Dorsolateral prefrontal cortex (tissue), 120 donors: ENCODE measurements at regions of chr13 and their contacts with region 1.

Region 1: GRCh38 chr13:100721885-100722512 is 47.4 kb upstream of the TMTC4 start:
- DNase-seq: peak in 5 of 10 donors; percentile 45 to 74 (median 58)
- H3K4me3 ChIP-seq: peak overlapping the region in 1 of 59 donors; percentile 1
- H3K27ac ChIP-seq: peak overlapping the region in 2 of 59 donors; percentile 30 to 58
- H3K27me3 ChIP-seq: no peaks in the 10 kb centered on the region
- CTCF ChIP-seq: peak; percentile 54 to 90 (median 76)

Region 2: DNA sequence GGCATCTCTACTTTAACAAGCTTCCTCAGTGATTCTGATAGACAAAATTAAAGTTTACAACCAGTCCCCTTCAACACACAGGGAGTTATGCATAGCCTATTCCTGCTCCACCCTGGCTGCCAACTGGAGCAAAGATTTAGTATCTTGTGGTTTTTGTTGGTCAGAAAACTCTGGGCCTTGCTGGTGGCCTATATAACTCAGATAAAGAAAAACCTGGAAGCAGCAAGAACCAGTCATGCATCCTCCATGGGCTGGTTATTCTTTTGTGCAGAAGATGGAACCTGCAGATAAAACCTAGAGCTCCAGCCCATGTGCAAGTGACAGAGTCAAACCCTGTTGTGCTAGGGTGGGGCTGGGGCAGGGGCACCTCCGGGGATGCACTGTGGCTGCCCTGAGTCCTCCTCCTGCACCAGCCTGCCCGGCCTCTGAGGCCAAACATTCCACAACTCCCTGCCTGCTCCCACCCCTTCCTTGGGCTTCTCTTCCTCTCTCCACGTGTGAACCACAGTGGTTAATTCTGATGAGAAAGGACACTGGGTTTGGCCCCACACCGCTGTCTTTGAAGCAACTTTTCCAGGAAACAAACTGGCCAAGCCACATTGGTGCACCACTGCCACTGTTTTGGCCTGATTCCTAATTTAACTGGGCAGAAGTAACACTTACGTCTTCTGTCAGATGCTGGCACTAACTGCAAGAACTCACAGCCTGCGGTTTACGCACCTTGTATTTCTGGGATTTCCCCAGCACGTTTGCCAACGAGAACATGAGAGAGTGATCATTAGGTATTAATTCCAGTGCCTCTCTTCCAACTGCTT is 110.1 kb before region 1 on chr13:
- intact Hi-C with region 1: no loop called
- DNase-seq: peak in 1 of 10 donors; percentile 28
- H3K4me3 ChIP-seq: no peak overlapping the region
- H3K27ac ChIP-seq: peak overlapping the region in 35 of 59 donors; percentile 7 to 62 (median 30)
- H3K27me3 ChIP-seq: no peaks in the 10 kb centered on the region
- CTCF ChIP-seq: no peak

Region 3: DNA sequence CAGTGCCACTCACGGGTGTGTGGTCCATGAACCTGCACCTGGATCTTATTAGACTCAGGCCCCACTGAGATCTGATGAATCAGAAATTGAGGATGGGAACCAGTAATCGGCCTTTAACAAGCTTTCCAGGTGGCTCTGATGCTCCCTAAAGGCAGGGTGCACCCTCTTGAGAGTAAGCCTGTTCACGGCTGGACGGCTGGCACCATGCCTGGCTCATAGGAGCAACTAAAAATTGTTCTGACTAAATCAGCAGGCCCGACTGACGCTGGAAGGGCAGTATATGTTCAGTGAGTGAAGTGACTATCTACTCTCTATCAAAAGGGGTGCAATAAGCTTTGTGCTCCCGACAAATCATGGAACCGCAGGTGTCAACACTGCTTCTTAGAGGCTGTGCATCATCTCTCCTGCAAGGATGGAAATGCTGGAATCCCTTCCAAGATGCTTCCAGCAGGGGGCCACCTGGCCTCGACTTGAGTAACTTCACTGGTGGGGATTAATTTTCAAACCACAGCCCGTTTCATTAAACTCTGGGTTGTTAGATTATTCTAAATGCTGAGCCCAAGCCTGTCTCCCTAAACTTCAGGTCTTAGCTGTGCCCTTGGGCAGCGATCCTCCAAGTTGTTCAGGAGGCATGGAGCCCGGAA is 75.8 kb before region 1 on chr13:
- intact Hi-C with region 1: loop called in 1 of 2 experiments (anchors 5 kb)
- DNase-seq: peak in 8 of 10 donors; percentile 69 to 83 (median 80)
- H3K4me3 ChIP-seq: no peak overlapping the region
- H3K27ac ChIP-seq: peak overlapping the region in 54 of 59 donors; percentile 7 to 100 (median 77)
- H3K27me3 ChIP-seq: no peaks in the 10 kb centered on the region
- CTCF ChIP-seq: peak; percentile 39 to 78 (median 69)

Region 4: GRCh38 chr13:100674848-100675660 is 46.9 kb before region 1 on chr13:
- intact Hi-C with region 1: loop called in 1 of 2 experiments (anchors 5 kb)
- DNase-seq: peak; percentile 100
- H3K4me3 ChIP-seq: peak overlapping the region; percentile 61 to 99 (median 81)
- H3K27ac ChIP-seq: peak overlapping the region; percentile 27 to 100 (median 93)
- H3K27me3 ChIP-seq: no peaks in the 10 kb centered on the region
- CTCF ChIP-seq: peak in 54 of 56 donors; percentile 4 to 78 (median 54)

Region 5: DNA sequence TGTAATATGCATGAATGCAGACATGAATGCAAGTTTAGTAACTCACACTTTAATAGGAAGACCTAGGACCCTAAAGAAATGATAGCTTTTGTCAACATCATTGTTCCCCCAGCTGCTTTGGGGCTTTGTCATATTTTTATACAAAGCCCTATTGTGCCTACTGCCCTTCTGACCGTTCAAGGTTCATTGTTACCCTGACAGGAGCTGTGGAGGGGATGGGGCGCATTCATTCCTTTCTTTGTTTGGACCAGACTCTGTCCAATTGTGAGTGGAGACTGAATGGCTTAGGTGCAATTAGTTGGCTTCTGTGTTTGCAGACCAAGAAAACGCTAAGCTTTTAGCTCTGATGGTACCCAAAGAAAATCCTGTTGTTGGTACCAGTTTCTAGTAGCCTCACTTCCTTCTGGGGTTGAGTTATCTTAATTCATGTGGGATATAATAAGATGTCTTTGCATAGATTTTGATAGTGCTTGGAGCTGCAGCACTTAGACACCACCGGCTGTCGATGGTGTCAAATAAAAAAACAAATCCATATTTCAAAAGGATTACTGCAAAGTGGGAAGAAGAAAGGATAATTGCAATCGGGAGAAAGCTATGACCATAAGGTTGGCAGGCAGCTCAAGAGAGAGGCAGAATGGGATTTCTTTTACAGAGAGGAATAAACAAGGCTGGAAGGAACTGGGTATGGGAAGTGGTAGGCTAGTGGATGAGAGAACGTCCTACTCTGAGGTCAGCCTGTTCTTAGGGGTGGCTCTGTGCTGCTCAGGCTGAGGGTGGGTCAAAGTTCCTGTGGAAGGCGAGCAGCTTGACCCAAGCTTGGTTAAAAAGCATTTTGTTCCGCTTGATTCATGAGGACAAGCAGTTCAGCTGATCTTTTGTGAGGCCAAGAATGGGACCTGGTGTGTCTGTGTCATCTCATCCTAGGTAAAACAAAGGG is 86.6 kb after region 1 on chr13:
- intact Hi-C with region 1: no loop called
- DNase-seq: no peak
- H3K4me3 ChIP-seq: peak overlapping the region in 1 of 59 donors; percentile 27
- H3K27ac ChIP-seq: peak overlapping the region in 49 of 59 donors; percentile 4 to 81 (median 59)
- H3K27me3 ChIP-seq: peaks cover 0 to 3% (median 0%) of the 10 kb centered on the region in 45 donors
- CTCF ChIP-seq: no peak

Region 6: DNA sequence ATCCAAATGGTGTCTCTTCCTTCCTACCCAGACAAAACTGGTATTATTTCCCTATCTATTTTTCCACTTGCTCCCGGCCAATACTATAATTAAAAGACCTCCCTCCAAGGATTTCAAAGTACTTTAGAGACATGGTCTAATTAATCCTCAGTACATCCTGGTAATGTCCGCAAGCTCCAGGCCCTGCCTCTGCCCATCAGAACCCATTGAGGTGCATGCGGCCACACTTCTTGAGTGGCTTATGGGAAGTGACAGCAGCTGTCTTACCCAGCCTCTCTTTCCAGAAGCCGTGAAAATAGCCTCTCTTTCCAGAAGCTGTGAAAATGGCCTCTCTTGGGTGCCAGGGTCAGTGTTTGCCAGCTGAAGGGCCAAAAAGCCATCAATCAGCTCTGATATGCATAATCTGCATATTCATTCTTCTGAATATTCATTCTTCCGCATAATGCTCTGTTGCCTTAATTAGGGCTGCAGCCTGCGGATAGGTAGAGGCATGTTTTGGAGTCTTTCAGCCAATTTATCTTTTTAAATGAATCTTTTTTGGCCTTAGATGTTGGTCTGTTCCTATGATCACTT is 101.0 kb after region 1 on chr13:
- intact Hi-C with region 1: loop called in 1 of 2 experiments (anchors 5 kb)
- DNase-seq: no peak
- H3K4me3 ChIP-seq: no peak overlapping the region
- H3K27ac ChIP-seq: no peak overlapping the region
- H3K27me3 ChIP-seq: no peaks in the 10 kb centered on the region
- CTCF ChIP-seq: no peak

Region 7: DNA sequence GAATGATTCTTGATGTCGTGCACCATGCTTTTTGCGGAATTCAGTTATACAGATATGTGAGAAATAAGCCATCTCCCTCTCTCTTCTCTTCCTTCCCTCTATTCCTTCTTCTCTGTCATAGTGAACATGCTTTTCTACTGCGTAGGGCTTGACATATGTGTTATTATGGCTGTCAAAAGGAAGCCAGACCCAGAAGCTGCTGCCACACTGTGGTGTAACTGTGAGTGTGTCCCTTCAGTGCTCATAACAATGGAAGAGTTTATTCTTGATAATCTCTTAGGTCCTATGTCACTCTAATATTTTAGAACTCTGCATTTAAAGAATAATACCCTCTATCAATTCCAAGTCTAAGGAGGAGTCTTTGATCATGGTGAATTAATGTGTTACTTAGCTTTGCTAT is 161.5 kb after region 1 on chr13:
- intact Hi-C with region 1: loop called in 1 of 2 experiments (anchors 5 kb)
- DNase-seq: peak in 2 of 10 donors; percentile 7 to 52
- H3K4me3 ChIP-seq: no peak overlapping the region
- H3K27ac ChIP-seq: no peak overlapping the region
- H3K27me3 ChIP-seq: no peaks in the 10 kb centered on the region
- CTCF ChIP-seq: peak in 43 of 56 donors; percentile 9 to 72 (median 32)

Region 8: GRCh38 chr13:100987953-100988352 is 266.0 kb after region 1 on chr13:
- intact Hi-C with region 1: loop called in 1 of 2 experiments (anchors 2 kb)
- DNase-seq: peak in 1 of 10 donors; percentile 12
- H3K4me3 ChIP-seq: peak overlapping the region in 1 of 59 donors; percentile 38
- H3K27ac ChIP-seq: no peak overlapping the region
- H3K27me3 ChIP-seq: peaks cover 0 to 1% (median 0%) of the 10 kb centered on the region in 45 donors
- CTCF ChIP-seq: peak in 53 of 56 donors; percentile 23 to 68 (median 47)